Left ventricle myocardium superior (tissue), 1 donor: ENCODE measurements at regions of chr10 and their contacts with region 1.

Region 1: GRCh38 chr10:63236113-63236935 is 103.2 kb downstream of the NRBF2 start:
- DNase-seq: no peak
- ATAC-seq: peak; percentile 70

Region 2: GRCh38 chr10:63008491-63008890 is 227.8 kb before region 1 on chr10:
- intact Hi-C with region 1: no loop called
- DNase-seq: no peak
- ATAC-seq: no peak

Region 3: DNA sequence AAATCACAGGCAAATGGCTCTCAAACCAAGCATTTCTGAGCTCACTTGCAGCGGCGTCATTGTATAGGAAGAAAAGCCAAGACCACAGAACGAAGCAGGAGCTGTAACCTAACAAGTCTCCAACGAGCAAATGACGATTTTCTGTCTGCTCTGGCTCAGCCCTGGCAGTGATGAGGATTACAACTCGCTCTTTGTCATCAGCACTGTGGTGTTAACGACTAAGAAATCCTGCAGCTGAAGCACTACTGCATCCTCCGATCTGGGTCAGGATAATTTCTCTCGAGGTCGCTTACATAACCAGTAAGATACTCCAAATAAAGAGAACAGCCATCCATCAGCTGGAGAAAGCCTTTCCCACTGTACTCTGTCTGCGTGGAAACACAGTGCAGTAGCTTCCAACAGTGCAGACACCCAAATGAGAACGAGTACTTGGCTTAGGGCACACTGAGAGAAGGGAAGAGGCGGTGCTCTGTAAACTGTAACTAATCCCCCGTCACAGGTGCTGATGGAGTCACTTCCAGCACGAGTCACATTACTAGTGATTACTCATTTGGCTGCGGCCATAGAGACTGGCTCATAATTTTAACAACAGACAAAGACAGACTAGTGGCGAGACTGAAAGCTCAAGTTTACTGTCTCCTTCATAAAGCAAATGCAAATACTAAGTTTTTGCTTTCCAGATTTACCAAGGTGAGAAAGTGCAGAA is 32.6 kb after region 1 on chr10:
- intact Hi-C with region 1: loop called (anchors 5 kb)
- DNase-seq: peak; percentile 58
- ATAC-seq: peak; percentile 97

Region 4: DNA sequence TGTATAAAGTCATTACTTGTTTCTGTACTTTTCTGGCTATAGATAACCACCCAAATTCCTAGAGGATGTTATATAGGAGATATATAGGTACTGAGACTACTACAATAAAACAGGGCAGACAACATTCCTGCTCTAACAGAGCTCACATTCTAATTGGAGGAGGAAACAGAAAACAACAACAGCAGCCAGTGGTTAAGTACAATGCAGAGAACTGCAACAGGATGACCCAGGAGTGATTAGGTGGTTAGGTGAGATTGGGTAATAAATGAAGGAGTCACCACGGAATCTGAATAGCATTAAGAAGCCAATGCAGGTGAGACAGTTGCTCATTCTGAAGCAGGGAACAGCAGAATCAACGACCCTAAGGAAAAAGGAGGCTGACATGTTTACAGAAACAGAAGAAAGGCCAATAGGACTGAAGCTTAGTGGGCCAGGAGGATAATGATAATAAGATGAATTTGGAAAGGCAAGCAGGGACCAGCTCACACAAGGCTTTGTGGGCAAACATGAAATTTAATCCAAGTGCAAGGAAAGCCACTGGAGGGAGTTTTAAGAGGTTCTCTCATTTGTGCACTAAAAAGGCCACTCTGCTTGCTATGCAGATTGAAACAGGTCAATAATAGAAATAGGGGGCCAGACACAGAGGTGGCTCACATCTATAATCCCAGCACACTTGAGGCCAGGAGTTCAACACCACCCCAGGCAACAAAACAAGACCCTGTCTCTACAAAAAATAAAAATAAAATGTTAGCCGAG is 268.0 kb after region 1 on chr10:
- intact Hi-C with region 1: no loop called
- DNase-seq: no peak
- ATAC-seq: no peak